ENCODE measurements at regions of chr5 and their contacts with region 1.

Region 1: GRCh38 chr5:80093796-80094195 is 58.6 kb downstream of the THBS4 start:
- DNase-seq: no peak
- ATAC-seq: no peak
- H3K4me3 ChIP-seq: no peak overlapping the region
- H3K27ac ChIP-seq: no peak overlapping the region
- H3K4me1 ChIP-seq: no peaks in the 10 kb centered on the region
- H3K27me3 ChIP-seq: no peaks in the 10 kb centered on the region

Region 2: DNA sequence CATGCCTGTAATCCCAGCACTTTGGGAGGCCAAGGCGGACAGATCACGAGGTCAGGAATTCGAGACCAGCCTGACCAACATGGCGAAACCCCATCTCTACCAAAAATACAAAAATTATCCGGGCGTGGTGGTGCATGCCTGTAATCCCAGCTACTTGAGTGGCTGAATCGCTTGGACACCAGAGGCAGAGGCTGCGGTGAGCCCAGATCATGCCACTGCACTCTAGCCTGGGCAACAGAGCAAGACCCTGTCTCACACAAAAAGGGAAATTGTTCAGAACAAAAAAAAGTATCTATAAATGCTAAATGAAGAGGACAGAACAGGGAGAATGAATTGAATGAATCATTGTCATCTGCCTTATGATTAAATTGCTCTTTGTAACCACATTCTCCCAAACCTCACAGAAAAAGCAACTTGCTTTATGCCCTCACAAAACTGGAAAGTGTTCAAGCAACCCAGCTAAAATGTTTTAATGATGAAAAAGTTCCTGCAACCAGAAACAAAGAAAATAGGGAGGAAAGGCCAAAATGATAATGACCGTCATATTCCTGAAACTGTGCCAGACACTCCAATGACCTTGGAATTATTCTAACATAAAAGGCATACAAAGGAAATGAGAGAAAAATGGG is 78.4 kb after region 1 on chr5:
- intact Hi-C with region 1: no loop called
- DNase-seq: no peak
- ATAC-seq: no peak
- H3K4me3 ChIP-seq: no peak overlapping the region
- H3K27ac ChIP-seq: no peak overlapping the region
- H3K4me1 ChIP-seq: no peaks in the 10 kb centered on the region
- H3K27me3 ChIP-seq: no peaks in the 10 kb centered on the region

Region 3: GRCh38 chr5:80275347-80275746 is 181.6 kb after region 1 on chr5:
- intact Hi-C with region 1: loop called in 1 of 2 experiments (anchors 10 kb)
- DNase-seq: no peak
- ATAC-seq: no peak
- H3K4me3 ChIP-seq: no peak overlapping the region
- H3K27ac ChIP-seq: no peak overlapping the region
- H3K4me1 ChIP-seq: no peaks in the 10 kb centered on the region
- H3K27me3 ChIP-seq: no peaks in the 10 kb centered on the region

Region 4: GRCh38 chr5:80308526-80308925 is 214.7 kb after region 1 on chr5:
- intact Hi-C with region 1: loop called (anchors 2 to 5 kb)
- DNase-seq: peak in 1 of 2 donors; percentile 61
- ATAC-seq: no peak
- H3K4me3 ChIP-seq: no peak overlapping the region
- H3K27ac ChIP-seq: no peak overlapping the region
- H3K4me1 ChIP-seq: no peaks in the 10 kb centered on the region
- H3K27me3 ChIP-seq: no peaks in the 10 kb centered on the region

Measured in aorta (tissue), 5 donors.